Esophagus muscularis mucosa (tissue), 4 donors: ENCODE measurements at regions of chr12 and their contacts with region 1.

Region 1: DNA sequence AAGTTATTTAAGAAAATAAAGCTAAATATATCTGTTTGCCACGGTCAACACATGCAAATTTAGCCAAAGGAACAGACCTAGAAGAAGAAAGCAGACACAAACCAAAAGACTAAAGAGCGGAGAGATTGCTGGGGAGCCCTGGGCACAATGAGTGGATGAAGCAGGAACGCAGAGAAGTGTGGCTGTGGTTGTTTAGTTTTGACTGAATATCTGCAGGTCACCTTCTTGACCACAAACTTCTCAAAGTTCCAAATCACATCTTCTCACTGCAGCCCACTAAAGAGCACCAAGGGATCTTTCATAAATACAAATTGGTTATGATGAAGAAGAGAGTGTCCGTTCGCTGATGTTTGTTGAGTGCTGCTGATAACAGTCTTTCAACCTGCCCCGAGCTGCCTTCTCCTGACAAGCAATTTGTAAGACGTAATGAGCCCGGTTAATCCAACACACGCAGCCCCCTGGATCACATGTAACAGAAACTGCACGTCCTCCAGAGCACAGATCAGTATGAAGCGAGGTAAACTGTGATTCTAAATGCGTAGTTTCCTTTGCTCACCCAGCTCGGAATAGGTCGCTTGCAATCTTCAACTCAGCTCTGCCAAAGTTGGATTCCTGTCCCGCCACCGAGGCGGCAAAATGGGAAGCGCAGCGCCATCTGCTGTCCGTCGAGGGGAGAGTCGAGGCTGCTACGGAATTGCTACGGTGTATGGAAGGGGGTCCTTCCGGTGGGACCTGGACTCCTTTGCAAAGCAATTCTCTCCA is 120.8 kb downstream of the GXYLT1 start:
- DNase-seq: peak; percentile 92
- H3K4me3 ChIP-seq: peak overlapping the region; percentile 41 to 59 (median 46)
- H3K27ac ChIP-seq: no peak overlapping the region
- H3K4me1 ChIP-seq: peaks cover 7 to 12% (median 10%) of the 10 kb centered on the region in 4 donors
- H3K27me3 ChIP-seq: no peaks in the 10 kb centered on the region
- CTCF ChIP-seq: peak; percentile 84 to 96 (median 90)
- EP300 ChIP-seq: no peak
- POLR2A ChIP-seq: no peak

Region 2: DNA sequence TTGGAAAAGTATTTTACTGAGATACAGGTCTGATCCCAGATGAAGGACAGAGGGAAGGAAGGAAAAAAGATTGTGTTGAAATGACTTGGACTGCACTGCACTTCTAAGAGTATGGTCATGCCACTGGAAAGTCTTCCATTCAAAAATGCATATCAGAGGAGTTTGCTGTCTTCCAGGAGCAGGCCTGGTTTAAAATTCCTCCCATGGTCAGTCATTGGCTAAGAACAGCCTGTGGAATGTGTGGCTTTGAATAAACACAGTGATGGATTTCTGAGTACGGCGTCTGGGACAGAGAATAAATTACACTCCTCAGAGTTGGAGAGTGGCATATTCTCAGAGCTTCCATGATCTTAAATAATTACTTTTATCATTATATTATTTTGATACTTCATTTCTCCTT is 1081.6 kb before region 1 on chr12:
- intact Hi-C with region 1: loop called (anchors 5 kb)
- DNase-seq: no peak
- H3K4me3 ChIP-seq: no peak overlapping the region
- H3K27ac ChIP-seq: no peak overlapping the region
- H3K4me1 ChIP-seq: peaks cover 0 to 4% (median 0%) of the 10 kb centered on the region in 4 donors
- H3K27me3 ChIP-seq: no peaks in the 10 kb centered on the region
- CTCF ChIP-seq: no peak
- EP300 ChIP-seq: no peak
- POLR2A ChIP-seq: no peak

Region 3: GRCh38 chr12:41264281-41264680 is 759.6 kb before region 1 on chr12:
- intact Hi-C with region 1: loop called (anchors 2 kb)
- DNase-seq: no peak
- H3K4me3 ChIP-seq: no peak overlapping the region
- H3K27ac ChIP-seq: no peak overlapping the region
- H3K4me1 ChIP-seq: peaks cover 0 to 9% (median 7%) of the 10 kb centered on the region in 4 donors
- H3K27me3 ChIP-seq: no peaks in the 10 kb centered on the region
- CTCF ChIP-seq: peak; percentile 45 to 55 (median 53)
- EP300 ChIP-seq: no peak
- POLR2A ChIP-seq: no peak

Region 4: DNA sequence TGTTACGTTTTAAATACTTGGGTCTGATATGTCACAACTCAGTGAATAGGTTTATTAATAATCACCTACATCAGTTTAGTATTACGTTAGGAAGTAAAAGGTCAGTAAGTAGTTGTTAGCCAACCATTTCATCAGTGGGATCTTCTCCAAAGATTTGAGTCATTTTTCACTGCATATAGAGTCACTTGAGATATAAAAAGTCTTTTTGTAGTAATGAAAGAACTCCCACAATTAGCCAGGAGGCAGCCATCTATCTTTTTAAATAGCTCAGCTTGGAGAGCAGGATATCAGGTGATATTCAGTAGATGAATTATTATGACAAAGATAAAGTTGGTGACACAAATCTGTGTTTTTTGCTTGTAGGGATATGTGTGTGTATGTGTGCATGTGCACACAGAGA is 526.5 kb before region 1 on chr12:
- intact Hi-C with region 1: no loop called
- DNase-seq: no peak
- H3K4me3 ChIP-seq: no peak overlapping the region
- H3K27ac ChIP-seq: no peak overlapping the region
- H3K4me1 ChIP-seq: no peaks in the 10 kb centered on the region
- H3K27me3 ChIP-seq: no peaks in the 10 kb centered on the region
- CTCF ChIP-seq: no peak
- EP300 ChIP-seq: no peak
- POLR2A ChIP-seq: no peak

Region 5: DNA sequence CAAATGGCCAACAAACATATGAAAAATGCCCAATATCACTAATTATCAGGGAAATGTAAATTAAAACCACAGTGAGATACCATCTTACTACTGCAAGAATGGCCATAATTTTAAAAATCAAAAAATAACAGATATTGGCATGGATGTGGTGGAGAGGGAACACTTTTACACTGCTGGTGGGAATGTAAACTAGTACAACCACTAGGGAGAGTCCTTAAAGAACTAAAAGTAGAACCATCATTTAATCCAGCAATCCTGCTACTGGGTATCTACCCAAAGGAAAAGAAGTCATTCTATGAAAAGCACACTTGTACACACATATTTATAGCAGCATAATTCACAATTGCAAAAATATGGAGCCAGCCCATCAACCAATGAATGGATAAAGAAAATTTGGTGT is 338.9 kb before region 1 on chr12:
- intact Hi-C with region 1: loop called (anchors 2 kb)
- DNase-seq: no peak
- H3K4me3 ChIP-seq: no peak overlapping the region
- H3K27ac ChIP-seq: no peak overlapping the region
- H3K4me1 ChIP-seq: no peaks in the 10 kb centered on the region
- H3K27me3 ChIP-seq: no peaks in the 10 kb centered on the region
- CTCF ChIP-seq: peak in 1 of 3 experiments; percentile 46
- EP300 ChIP-seq: no peak
- POLR2A ChIP-seq: no peak